OCI-LY7 (cell line): ENCODE measurements at regions of chr7 and their contacts with region 1.

Region 1: DNA sequence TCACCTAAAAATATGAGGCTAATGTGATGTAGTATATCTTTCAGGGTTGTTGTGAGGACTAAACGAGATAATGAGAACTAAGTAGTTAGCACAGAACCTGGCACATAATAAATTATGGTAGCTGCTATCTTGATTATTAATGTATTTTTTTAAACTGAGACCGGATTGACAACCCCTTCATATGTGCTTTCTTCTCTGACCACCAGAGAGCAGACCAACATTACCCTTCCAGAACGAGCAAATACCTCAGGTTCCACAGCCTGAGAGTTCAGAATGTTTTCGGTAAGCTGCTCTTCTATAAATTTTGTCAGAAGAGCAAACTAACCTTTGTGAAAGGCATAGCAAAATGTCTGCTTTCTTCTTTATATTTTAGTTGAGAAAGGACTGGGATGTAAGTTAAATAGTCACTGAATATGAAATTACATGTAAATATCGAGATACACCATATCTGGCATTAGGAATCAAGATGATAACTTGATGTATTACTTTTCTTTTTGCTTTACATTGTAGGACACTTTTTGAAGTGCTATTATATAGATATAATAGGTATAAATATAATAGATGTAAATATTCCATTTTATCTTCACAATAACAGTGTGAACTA is 13.6 kb upstream of the BPGM start:
- DNase-seq: peak; percentile 61
- H3K4me3 ChIP-seq: no peak overlapping the region
- H3K27ac ChIP-seq: no peak overlapping the region
- H3K4me1 ChIP-seq: no peaks in the 10 kb centered on the region
- CTCF ChIP-seq: peak; percentile 86

Region 2: DNA sequence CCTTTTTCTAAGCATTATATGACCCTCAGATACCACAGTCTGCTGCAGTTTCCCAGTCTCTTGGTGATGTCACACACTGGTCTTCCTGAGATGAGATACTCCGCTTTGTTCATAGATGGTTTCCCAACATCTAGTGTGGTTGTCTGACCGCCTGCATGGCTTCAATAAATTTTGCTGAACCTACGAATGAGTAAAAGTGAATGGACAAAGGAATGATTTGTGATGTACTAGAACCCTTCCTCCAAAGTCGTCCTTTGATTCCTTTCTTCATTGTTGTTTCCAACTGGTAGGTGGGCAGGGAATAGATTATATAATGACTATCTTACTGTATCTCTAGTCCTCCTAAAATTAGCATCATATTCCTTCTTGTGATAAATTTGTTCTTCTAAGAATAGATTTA is 398.8 kb before region 1 on chr7:
- CTCF ChIA-PET with region 1: no interaction called
- POLR2A ChIA-PET with region 1: no interaction called
- intact Hi-C with region 1: no loop called
- DNase-seq: no peak
- H3K4me3 ChIP-seq: no peak overlapping the region
- H3K27ac ChIP-seq: no peak overlapping the region
- H3K4me1 ChIP-seq: no peaks in the 10 kb centered on the region
- CTCF ChIP-seq: no peak

Region 3: DNA sequence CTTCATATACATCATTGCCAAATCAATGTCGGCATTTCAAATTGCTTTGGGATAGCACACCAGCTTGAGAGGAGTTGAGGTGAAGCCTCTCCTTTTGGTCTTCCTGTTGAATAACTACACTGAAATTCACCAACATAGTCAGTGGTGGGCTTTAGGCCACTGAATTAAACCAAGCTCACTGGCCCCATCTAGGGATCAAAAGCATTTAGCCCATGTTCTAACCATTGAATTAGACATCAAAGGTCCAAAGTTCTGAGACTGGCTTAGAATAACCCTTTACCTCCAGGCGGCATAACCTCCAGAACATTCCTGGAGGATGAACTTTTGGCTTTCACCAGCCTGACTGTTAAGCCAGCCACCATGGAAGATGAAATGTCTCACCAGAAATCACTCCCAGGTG is 68.2 kb after region 1 on chr7:
- CTCF ChIA-PET with region 1: no interaction called
- POLR2A ChIA-PET with region 1: interaction called, 4 read pairs
- intact Hi-C with region 1: loop called (anchors 1 kb)
- DNase-seq: peak; percentile 60
- H3K4me3 ChIP-seq: no peak overlapping the region
- H3K27ac ChIP-seq: no peak overlapping the region
- H3K4me1 ChIP-seq: no peaks in the 10 kb centered on the region
- CTCF ChIP-seq: peak; percentile 78

Region 4: DNA sequence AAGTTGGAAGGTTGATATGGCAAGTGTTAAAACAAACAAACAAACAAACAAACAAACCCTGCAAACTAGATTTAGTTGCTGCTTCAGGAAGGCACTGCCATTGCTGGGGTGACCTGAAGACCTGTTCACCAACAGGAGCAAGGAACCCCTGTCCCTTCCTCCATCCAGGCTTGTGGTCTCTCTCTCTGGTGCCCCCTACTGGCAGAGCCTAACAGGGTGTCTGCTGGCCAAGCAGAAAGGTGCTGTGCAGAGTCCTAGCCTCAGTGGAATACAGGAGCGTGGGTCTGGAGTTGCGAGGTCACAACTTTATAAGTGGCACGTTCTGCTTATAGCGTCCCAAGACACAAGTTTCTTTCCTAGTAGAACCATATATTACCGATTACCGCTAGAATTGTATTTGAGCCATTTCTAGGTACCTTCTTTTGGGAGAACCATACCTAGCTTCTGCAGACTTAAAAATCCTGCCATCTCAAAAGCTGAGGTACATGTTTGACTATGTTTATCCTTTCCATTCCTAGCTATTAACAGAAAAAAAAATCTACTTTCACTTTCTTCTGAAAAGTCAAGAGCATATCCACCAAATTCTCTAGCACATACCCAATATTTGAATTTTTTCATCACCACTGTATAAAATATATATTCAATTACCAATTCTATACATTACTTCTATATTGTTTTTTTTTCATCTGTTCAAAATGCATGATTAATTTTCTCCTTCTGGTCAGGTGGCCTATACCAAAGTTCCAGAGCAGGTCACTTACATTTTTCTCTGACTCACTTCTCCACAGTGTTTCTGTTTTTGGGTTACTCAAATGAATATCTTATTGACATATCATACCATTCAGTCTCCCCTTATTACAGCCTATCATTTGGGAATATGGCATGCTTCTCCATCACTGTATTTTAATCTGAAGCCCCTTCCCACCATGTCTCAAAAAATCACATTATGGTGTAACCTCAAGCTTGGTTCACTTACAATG is 117.3 kb after region 1 on chr7:
- CTCF ChIA-PET with region 1: no interaction called
- POLR2A ChIA-PET with region 1: no interaction called
- intact Hi-C with region 1: loop called (anchors 2 kb)
- DNase-seq: peak; percentile 61
- H3K4me3 ChIP-seq: no peak overlapping the region
- H3K27ac ChIP-seq: no peak overlapping the region
- H3K4me1 ChIP-seq: no peaks in the 10 kb centered on the region
- CTCF ChIP-seq: peak; percentile 86

Region 5: GRCh38 chr7:134954197-134955082 is 321.4 kb after region 1 on chr7:
- CTCF ChIA-PET with region 1: no interaction called
- POLR2A ChIA-PET with region 1: no interaction called
- intact Hi-C with region 1: loop called (anchors 2 kb)
- DNase-seq: peak; percentile 50
- H3K4me3 ChIP-seq: no peak overlapping the region
- H3K27ac ChIP-seq: no peak overlapping the region
- H3K4me1 ChIP-seq: no peaks in the 10 kb centered on the region
- CTCF ChIP-seq: peak; percentile 87